ENCODE measurements at regions of chr16 and their contacts with region 1.

Region 1: GRCh38 chr16:24282141-24282540 is 26.0 kb downstream of the CACNG3 start:
- DNase-seq: no peak
- ATAC-seq: no peak
- H3K4me3 ChIP-seq: no peak overlapping the region
- H3K27ac ChIP-seq: no peak overlapping the region
- H3K4me1 ChIP-seq: no peaks in the 10 kb centered on the region
- H3K27me3 ChIP-seq: peaks cover 0 to 11% (median 3%) of the 10 kb centered on the region in 9 donors
- CTCF ChIP-seq: no peak
- POLR2A ChIP-seq: no peak

Region 2: DNA sequence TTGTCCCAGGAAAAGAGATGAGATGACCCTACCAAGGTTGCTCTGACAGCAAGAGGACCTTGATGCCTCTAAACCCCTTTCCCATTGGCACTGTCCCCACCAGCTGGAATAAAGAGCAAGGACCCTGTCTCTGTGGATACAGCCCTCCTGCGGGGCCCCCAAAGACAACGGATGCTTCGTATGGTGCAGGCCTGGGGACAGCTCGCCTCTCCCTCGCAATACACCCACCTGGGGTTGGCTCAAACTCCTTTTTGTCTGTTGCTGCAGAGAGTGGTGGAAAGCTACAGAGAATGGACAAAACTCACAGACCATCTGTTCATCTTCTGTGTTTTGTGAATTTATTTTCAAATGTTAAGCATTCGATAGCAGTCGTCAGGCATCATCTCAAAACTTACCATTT is 53.6 kb before region 1 on chr16:
- intact Hi-C with region 1: loop called in 1 of 10 experiments (anchors 5 kb)
- DNase-seq: no peak
- ATAC-seq: no peak
- H3K4me3 ChIP-seq: no peak overlapping the region
- H3K27ac ChIP-seq: no peak overlapping the region
- H3K4me1 ChIP-seq: no peaks in the 10 kb centered on the region
- H3K27me3 ChIP-seq: peaks cover 0 to 6% (median 0%) of the 10 kb centered on the region in 9 donors
- CTCF ChIP-seq: no peak
- POLR2A ChIP-seq: no peak